ENCODE measurements at regions of chr3 and their contacts with region 1.

Region 1: DNA sequence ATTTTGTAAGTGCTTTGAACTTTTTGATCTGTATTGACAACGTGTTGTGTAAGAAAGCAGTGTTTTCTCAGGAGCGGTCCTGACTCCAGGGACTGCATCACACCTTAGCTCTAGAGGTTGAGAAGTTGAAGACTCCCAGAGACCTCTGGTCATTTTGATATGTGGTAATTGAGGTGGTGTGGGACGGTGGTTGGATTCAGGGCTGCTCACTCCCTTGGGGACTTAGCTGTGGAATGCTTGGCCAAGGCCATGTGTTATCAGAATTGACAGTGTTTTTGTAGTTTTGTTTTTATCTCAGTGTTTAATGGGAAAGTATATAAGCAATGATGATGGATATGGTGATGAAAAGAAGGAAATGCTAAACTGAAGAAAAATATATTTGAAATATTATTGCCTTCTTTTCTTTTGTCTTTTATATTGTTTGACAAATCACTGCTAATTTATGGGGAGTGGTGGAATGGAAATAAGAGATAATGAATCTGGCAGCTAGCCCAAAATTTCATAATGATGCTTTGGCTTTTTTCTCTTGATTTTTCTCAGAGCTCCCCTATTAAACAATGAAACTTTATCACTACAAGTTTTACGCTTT is 16.0 kb downstream of the CMSS1 start:
- DNase-seq: no peak
- H3K4me3 ChIP-seq: no peak overlapping the region
- H3K4me3 Mint-ChIP-seq: no peak overlapping the region
- H3K27ac ChIP-seq: no peak overlapping the region
- H3K27ac Mint-ChIP-seq: no peak overlapping the region
- H3K4me1 ChIP-seq: no peaks in the 10 kb centered on the region
- H3K4me1 Mint-ChIP-seq: peaks cover 0 to 2% (median under 1%) of the 10 kb centered on the region in 4 donors
- H3K27me3 ChIP-seq: no peaks in the 10 kb centered on the region
- H3K27me3 Mint-ChIP-seq: no peaks in the 10 kb centered on the region

Region 2: GRCh38 chr3:99817437-99818240 is 16.1 kb before region 1 on chr3 and contains the start of gene CMSS1:
- CTCF ChIA-PET with region 1: interaction called, 42 read pairs
- POLR2A ChIA-PET with region 1: interaction called, 4 read pairs
- intact Hi-C with region 1: no loop called
- DNase-seq: peak; percentile 96 to 98 (median 96)
- H3K4me3 ChIP-seq: peak within 1 kb of the TSS; percentile 59 to 73
- H3K4me3 Mint-ChIP-seq: peak within 1 kb of the TSS; percentile 93 to 98 (median 96)
- H3K27ac ChIP-seq: peak within 1 kb of the TSS; percentile 80
- H3K27ac Mint-ChIP-seq: peak within 1 kb of the TSS; percentile 99 to 100 (median 100)
- H3K4me1 ChIP-seq: peaks cover 20% of the 10 kb centered on the region
- H3K4me1 Mint-ChIP-seq: peaks cover 25 to 40% (median 34%) of the 10 kb centered on the region in 4 donors
- H3K27me3 ChIP-seq: no peaks in the 10 kb centered on the region
- H3K27me3 Mint-ChIP-seq: no peaks in the 10 kb centered on the region
- total RNA-seq, gene CMSS1: 18.3 to 20.5 TPM

Region 3: GRCh38 chr3:99843590-99844258 is 10.0 kb after region 1 on chr3:
- CTCF ChIA-PET with region 1: interaction called, 11 read pairs
- POLR2A ChIA-PET with region 1: no interaction called
- intact Hi-C with region 1: no loop called
- DNase-seq: no peak
- H3K4me3 ChIP-seq: no peak overlapping the region
- H3K4me3 Mint-ChIP-seq: no peak overlapping the region
- H3K27ac ChIP-seq: no peak overlapping the region
- H3K27ac Mint-ChIP-seq: no peak overlapping the region
- H3K4me1 ChIP-seq: no peaks in the 10 kb centered on the region
- H3K4me1 Mint-ChIP-seq: peaks cover 0 to 5% (median 4%) of the 10 kb centered on the region in 4 donors
- H3K27me3 ChIP-seq: no peaks in the 10 kb centered on the region
- H3K27me3 Mint-ChIP-seq: no peaks in the 10 kb centered on the region

Region 4: DNA sequence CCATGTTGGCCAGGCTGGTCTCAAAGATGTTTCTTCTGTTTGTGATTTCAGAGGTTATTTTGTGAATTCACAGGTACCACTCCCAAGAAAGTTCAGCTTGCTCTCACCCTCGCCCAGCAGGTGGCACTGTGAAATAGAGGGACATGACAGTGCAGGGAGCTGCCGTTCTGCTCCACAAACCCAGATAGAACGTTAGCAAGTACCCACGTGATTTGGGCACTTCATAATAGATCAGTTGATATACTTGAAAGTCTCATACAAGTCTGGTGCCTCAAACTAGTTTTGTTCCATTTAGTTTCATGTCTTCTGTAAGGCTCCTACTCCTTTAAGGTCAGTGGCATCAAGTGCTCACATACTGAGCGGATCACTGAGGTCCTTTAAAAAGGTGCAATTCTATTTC is 235.1 kb after region 1 on chr3:
- CTCF ChIA-PET with region 1: interaction called, 5 read pairs
- POLR2A ChIA-PET with region 1: no interaction called
- intact Hi-C with region 1: loop called (anchors 2 kb)
- DNase-seq: peak; percentile 63 to 75 (median 66)
- H3K4me3 ChIP-seq: no peak overlapping the region
- H3K4me3 Mint-ChIP-seq: peak overlapping the region in 1 of 8 donors; percentile 45
- H3K27ac ChIP-seq: no peak overlapping the region
- H3K27ac Mint-ChIP-seq: peak overlapping the region in 2 of 7 donors; percentile 1 to 71
- H3K4me1 ChIP-seq: peaks cover 20% of the 10 kb centered on the region
- H3K4me1 Mint-ChIP-seq: peaks cover 24 to 31% (median 28%) of the 10 kb centered on the region in 4 donors
- H3K27me3 ChIP-seq: no peaks in the 10 kb centered on the region
- H3K27me3 Mint-ChIP-seq: no peaks in the 10 kb centered on the region

Region 5: DNA sequence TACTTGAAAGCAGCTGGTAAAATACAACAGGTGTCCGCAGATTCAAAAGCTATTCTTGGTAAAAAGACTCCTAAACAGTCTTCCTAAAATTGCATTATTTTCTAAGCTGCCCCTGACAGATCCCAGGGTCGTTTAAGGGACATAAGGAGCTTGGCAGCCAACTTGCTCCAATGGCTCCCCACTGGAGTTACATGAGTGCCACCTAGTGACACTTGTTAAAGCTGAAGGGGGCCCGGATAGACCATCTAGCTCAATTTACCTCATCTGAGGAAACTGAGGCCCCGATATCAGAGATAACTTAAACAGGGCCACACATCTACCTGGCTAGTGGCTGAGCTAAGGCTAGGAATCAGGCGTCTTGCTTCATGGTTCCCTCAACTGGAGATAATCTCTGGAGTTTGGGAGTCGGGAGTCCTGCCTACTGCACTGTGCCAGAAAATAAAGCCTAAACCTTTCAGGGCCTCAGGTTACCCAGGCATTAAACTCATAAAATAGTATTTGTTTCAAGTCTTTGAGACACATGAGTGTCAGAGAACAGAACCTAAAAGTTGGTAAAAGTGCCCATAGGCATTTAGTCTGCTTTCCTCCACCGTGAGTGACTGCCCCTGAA is 420.6 kb after region 1 on chr3:
- CTCF ChIA-PET with region 1: interaction called, 38 read pairs
- POLR2A ChIA-PET with region 1: no interaction called
- intact Hi-C with region 1: loop called (anchors 1 kb)
- DNase-seq: peak in 4 of 5 donors; percentile 21 to 32 (median 27)
- H3K4me3 ChIP-seq: no peak overlapping the region
- H3K4me3 Mint-ChIP-seq: no peak overlapping the region
- H3K27ac ChIP-seq: no peak overlapping the region
- H3K27ac Mint-ChIP-seq: no peak overlapping the region
- H3K4me1 ChIP-seq: no peaks in the 10 kb centered on the region
- H3K4me1 Mint-ChIP-seq: peaks cover 2 to 9% (median 6%) of the 10 kb centered on the region in 4 donors
- H3K27me3 ChIP-seq: no peaks in the 10 kb centered on the region
- H3K27me3 Mint-ChIP-seq: no peaks in the 10 kb centered on the region